Activated CD8-positive, alpha-beta T cell treated with anti-CD3 and anti-CD28 coated beads for 36 hours (primary cell): ENCODE measurements at regions of chr13 and their contacts with region 1.

Region 1: DNA sequence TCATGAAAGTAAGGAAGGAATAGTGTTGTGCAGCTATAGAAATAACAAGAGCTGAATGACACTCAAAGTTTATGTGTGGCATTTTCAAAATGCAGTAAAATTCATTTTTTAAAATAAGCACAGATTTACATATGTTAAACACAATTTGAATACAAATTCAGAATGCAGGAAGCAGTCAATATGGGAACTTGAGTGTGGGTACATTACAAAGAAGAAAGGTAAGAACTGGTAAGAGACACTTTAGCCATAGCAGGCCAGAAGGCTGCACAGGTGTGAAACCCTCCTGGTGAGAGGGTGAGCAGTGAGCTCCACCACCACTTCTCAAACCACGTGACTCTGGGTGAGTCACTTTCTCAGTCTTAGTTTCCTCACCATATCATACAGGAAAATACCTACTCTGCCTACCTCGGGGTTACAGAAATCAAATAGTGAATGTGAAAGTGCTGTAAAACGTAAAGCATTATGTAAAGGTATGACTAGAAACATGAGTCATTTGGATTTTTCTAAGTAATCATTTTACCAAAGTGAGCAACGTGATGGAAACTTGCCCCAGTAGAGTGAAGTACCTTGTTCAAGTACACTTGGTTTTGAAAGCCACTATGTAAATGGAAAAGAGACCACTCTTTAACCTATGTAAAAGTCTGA is 40.5 kb downstream of the USP12 start:
- DNase-seq: peak; percentile 90
- ATAC-seq: peak; percentile 86
- H3K4me3 Mint-ChIP-seq: peak overlapping the region; percentile 7
- H3K27ac Mint-ChIP-seq: peak overlapping the region; percentile 82
- H3K4me1 Mint-ChIP-seq: peaks cover 89% of the 10 kb centered on the region
- H3K27me3 Mint-ChIP-seq: no peaks in the 10 kb centered on the region
- CTCF ChIP-seq: no peak

Region 2: DNA sequence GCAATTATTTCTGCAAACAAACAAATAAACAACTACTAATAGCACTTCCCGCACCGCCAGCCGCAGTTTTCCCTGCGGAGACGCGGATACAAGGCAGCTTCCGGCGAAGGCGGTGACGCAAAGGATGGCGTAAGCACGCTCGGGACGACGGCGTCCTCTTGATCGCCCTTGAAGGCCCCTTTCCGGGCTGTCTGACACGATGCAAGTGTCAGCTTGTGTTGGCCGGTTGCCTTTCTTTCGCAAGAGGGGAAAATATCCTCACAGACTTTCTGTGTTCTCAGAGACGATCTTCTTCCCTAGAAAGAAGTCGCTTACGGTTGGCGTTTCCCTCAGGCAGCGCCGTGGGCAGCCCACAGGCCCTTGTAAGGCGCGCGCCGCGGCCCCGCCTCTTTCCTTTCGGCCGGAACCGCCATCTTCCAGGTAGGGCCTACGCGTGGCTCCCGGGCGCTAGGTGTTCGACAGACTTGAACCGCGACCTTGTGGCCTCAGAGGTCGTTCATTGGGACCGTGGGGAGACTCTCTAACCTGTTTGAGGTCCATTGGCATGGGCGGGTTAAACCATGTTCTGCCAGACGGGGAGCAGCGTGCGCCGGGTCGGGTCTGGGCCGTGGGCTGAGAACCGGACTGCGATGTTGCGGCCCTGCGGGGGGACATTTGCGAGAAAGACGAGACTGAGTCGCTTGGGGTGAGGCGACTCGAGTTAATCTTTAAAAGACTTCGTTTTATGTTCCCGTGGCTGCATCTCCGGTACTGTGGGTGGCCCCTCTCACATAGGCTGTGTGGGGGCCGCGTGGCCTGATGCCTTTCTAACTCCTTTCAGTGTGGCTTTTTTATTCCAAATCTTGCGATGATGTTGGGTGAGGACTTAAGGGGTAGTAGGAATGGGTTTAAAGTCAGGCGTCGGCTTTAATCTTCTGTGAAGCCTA is 120.3 kb after region 1 on chr13 and contains the start of gene RPL21:
- CTCF ChIA-PET with region 1: no interaction called
- POLR2A ChIA-PET with region 1: interaction called, 8 read pairs
- intact Hi-C with region 1: loop called (anchors 1 kb)
- DNase-seq: peak; percentile 94
- ATAC-seq: peak; percentile 94
- H3K4me3 Mint-ChIP-seq: peak within 1 kb of the TSS; percentile 96
- H3K27ac Mint-ChIP-seq: peak within 1 kb of the TSS; percentile 99
- H3K4me1 Mint-ChIP-seq: peaks cover 37% of the 10 kb centered on the region
- H3K27me3 Mint-ChIP-seq: no peaks in the 10 kb centered on the region
- CTCF ChIP-seq: no peak
- total RNA-seq, gene RPL21: 1,401 to 1,445 TPM

Region 3: GRCh38 chr13:27374650-27375049 is 243.5 kb after region 1 on chr13:
- CTCF ChIA-PET with region 1: no interaction called
- POLR2A ChIA-PET with region 1: no interaction called
- intact Hi-C with region 1: no loop called
- DNase-seq: peak; percentile 70
- ATAC-seq: peak; percentile 93
- H3K4me3 Mint-ChIP-seq: no peak overlapping the region
- H3K27ac Mint-ChIP-seq: no peak overlapping the region
- H3K4me1 Mint-ChIP-seq: peaks cover 8% of the 10 kb centered on the region
- H3K27me3 Mint-ChIP-seq: peaks cover 15% of the 10 kb centered on the region
- CTCF ChIP-seq: peak; percentile 52

Region 4: GRCh38 chr13:27573265-27573664 is 442.2 kb after region 1 on chr13:
- CTCF ChIA-PET with region 1: no interaction called
- POLR2A ChIA-PET with region 1: no interaction called
- intact Hi-C with region 1: no loop called
- DNase-seq: no peak
- ATAC-seq: peak; percentile 61
- H3K4me3 Mint-ChIP-seq: no peak overlapping the region
- H3K27ac Mint-ChIP-seq: peak overlapping the region; percentile 51
- H3K4me1 Mint-ChIP-seq: peaks cover 18% of the 10 kb centered on the region
- H3K27me3 Mint-ChIP-seq: no peaks in the 10 kb centered on the region
- CTCF ChIP-seq: no peak